Colonic mucosa (tissue), 4 donors: ENCODE measurements at regions of chr2 and their contacts with region 1.

Region 1: GRCh38 chr2:96913398-96914202 is 43.7 kb upstream of the SEMA4C start:
- DNase-seq: no peak
- H3K4me3 ChIP-seq: no peak overlapping the region
- H3K27ac ChIP-seq: no peak overlapping the region
- H3K4me1 ChIP-seq: no peaks in the 10 kb centered on the region
- H3K27me3 ChIP-seq: no peaks in the 10 kb centered on the region
- CTCF ChIP-seq: no peak

Region 2: DNA sequence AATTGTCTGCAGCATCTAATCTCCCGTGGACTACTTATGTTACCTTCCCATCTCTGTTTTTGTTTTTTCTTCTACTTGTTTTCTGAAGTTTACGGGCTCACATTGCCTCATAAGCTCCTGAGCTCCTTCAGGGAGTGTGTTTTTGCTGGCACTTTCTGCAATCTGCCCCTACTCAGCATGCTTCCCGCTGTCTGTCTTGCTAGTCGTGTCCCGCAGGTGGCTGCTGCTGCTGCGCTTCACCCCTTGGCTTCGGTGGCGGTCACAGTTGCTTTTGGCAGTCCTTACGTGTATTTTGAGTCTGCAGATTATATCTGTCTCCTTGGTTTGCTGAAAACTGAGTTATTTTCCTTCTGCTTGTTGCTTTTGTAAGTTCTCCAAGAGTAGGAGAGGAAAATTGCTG is 233.8 kb before region 1 on chr2:
- intact Hi-C with region 1: no loop called
- DNase-seq: peak; percentile 37
- H3K4me3 ChIP-seq: no peak overlapping the region
- H3K27ac ChIP-seq: no peak overlapping the region
- H3K4me1 ChIP-seq: no peaks in the 10 kb centered on the region
- H3K27me3 ChIP-seq: no peaks in the 10 kb centered on the region
- CTCF ChIP-seq: no peak

Region 3: GRCh38 chr2:96869822-96870625 is 43.6 kb before region 1 on chr2 and contains the start of gene SEMA4C:
- intact Hi-C with region 1: loop called (anchors 5 kb)
- DNase-seq: peak; percentile 67
- H3K4me3 ChIP-seq: peak within 1 kb of the TSS; percentile 96
- H3K27ac ChIP-seq: peak within 1 kb of the TSS; percentile 96
- H3K4me1 ChIP-seq: peaks cover 20% of the 10 kb centered on the region
- H3K27me3 ChIP-seq: no peaks in the 10 kb centered on the region
- CTCF ChIP-seq: no peak
- total RNA-seq, gene SEMA4C: 13.0 to 17.2 TPM

Region 4: DNA sequence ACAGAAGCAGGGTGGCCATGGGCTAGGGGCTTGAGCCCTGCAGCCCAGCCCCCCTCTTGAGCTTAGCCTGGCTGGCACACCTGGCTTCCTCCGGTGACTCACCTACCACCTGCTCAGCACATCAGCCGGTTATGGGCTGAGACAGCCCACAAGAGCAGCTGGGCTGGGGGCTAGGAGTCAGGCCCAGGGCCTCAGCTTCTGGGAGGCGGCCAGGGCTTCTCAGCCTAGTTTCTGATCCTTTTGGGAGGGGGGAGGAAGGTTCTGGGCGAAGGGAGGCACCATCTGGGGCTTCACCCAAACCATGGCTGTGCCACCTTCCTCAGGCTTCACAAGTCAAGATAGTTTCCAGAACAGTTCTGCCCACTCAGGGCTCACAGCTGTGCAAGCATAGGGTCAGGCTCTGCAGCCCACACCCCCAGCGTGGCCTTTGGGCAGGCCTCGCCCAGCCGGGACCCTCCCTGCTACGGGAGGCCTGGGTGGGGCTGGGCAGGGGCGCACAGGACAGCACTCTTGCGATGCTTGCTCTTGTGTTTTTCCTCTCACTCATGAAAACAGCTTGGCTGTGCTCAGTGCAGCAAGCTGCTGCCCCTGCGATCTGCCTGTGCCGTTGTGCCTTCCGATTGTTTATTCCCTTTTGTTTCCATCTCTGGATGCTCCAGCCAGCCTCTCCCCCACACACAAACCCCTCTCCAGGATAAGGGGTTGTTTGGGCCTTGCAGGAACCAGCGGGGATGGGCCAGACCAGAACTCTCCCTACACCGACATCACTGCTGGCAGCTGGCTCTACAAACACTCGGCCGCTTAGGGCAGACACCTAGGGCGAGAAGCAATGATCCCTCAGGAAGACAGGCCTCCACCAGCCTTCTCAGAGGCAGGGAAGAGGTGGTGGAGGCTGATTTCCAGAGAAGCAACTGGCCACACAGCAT is 17.6 kb before region 1 on chr2:
- intact Hi-C with region 1: no loop called
- DNase-seq: peak; percentile 35
- H3K4me3 ChIP-seq: no peak overlapping the region
- H3K27ac ChIP-seq: no peak overlapping the region
- H3K4me1 ChIP-seq: peaks cover 10% of the 10 kb centered on the region
- H3K27me3 ChIP-seq: no peaks in the 10 kb centered on the region
- CTCF ChIP-seq: no peak